ENCODE measurements at regions of chr5 and their contacts with region 1.

Region 1: GRCh38 chr5:164663198-164663989 is 1158.0 kb downstream of the MAT2B start:
- DNase-seq: no peak
- ATAC-seq: no peak

Region 2: GRCh38 chr5:164627021-164627420 is 36.4 kb before region 1 on chr5:
- intact Hi-C with region 1: loop called (anchors 2 kb)
- DNase-seq: no peak
- ATAC-seq: no peak

Region 3: DNA sequence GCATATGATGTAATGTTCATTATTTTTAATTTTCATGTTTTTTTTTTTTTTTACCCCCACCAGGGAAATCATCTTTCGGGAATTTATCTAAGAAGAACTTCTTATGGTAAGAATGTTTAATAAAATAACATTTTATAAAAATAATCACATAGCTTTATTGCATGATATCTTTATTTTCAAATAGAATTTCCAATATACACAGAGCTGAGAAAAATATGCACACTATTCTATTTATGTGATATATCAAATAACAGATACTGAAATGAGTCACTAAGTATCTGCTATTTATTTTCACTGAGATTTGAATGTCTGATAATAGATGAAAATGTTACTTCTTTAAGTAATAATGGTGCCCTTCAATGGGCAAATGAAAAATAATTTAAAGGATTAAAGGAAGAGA is 59.3 kb after region 1 on chr5:
- intact Hi-C with region 1: no loop called
- DNase-seq: no peak
- ATAC-seq: no peak

Region 4: DNA sequence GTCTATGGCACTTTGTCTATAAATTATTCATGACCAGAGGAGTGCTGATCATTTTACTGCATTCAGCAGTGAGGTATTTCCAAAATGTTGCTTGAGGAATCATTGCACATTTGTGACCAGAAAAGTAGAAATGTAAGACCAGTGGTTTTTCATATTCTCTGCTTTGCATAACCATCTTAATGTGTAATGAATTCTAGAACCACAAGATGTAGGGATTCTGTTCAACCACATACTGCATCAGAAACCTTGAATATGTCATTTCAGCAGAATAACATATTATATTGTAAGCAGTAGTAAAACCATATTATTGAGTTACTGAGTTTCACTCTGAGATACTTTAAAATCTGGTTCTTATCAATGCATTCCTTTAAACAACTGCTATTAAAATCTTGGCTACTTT is 85.5 kb after region 1 on chr5:
- intact Hi-C with region 1: no loop called
- DNase-seq: no peak
- ATAC-seq: no peak

Measured in left ventricle myocardium superior (tissue), 1 donor.